ENCODE measurements at regions of chr6 and their contacts with region 1.

Region 1: DNA sequence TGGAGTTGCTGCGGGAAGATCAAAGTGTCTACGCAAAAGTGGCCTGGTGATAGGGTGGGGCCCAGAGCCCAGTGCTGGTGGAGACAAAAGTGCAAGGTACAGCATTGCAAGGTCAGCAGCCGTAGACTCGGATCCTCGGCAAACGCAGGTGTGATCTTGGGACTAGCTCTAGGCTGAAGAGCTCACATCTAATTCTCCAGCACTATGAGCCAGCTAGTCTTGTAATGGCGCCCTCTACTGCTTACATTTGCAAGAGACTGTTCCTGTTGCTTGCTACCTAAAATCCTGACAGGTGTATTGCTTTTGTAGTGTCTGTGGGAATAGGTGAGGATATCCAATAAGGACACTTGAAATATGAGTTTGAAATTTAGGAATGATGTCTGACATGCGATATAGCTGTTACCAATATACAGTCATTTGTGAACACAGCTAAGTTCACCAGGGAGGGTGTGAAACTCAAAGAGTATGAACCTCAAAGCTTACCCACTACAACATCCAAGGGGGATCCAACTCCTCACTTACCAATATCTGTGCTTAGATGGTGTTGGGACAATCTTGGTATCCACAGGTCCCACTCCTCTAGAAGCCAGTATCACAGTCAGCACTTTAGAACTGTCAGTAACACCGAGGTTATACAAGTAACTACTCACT is 58.4 kb downstream of the PDE7B start:
- DNase-seq: peak; percentile 70
- ATAC-seq: peak; percentile 97
- H3K4me3 ChIP-seq: no peak overlapping the region
- H3K27ac ChIP-seq: no peak overlapping the region
- H3K4me1 ChIP-seq: no peaks in the 10 kb centered on the region
- H3K27me3 ChIP-seq: 0 out of 5 replicates have a peak, but pooled peaks cover 0 to 7% of the 10 kb centered on the region in 2 experiments
- CTCF ChIP-seq: peak; percentile 81
- EP300 ChIP-seq: no peak
- POLR2A ChIP-seq: no peak
- RAD21 ChIP-seq: peak; percentile 54; the same call in 1 of the 2 replicates

Region 2: GRCh38 chr6:135506270-135506997 is 403.4 kb before region 1 on chr6:
- CTCF ChIA-PET with region 1: interaction called, 9 read pairs
- POLR2A ChIA-PET with region 1: no interaction called
- in situ Hi-C with region 1: no loop called
- intact Hi-C with region 1: loop called (anchors 1 kb)
- DNase-seq: peak; percentile 45
- ATAC-seq: peak; percentile 70
- H3K4me3 ChIP-seq: no peak overlapping the region
- H3K27ac ChIP-seq: no peak overlapping the region
- H3K4me1 ChIP-seq: peaks cover 19% of the 10 kb centered on the region
- H3K27me3 ChIP-seq: no peaks in the 10 kb centered on the region
- CTCF ChIP-seq: peak; percentile 71
- EP300 ChIP-seq: no peak
- POLR2A ChIP-seq: no peak
- RAD21 ChIP-seq: no peak

Region 3: DNA sequence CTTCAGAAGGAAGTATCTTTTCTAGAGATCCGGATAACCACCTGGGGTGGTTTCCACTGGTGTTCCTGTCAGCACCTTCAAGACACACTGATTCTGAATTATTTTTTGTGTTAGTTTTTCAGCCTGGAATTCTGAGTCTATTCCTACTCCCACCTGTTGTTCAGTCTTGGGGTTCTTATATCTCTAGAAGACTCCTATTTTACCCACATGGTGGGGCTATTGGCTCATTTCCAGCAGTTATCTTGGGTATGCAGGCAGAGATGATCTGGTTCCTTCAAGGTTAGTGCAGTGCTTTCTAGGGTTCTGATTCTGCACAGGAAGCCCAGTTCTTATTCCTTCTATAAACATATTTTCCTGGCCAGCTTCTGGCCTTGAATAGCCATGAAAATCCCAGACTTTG is 234.0 kb before region 1 on chr6:
- CTCF ChIA-PET with region 1: no interaction called
- POLR2A ChIA-PET with region 1: no interaction called
- in situ Hi-C with region 1: no loop called
- intact Hi-C with region 1: loop called (anchors 1 kb)
- DNase-seq: peak; percentile 22
- ATAC-seq: peak; percentile 44; the same call in 1 of the 3 replicates
- H3K4me3 ChIP-seq: no peak overlapping the region
- H3K27ac ChIP-seq: no peak overlapping the region
- H3K4me1 ChIP-seq: no peaks in the 10 kb centered on the region
- H3K27me3 ChIP-seq: no peaks in the 10 kb centered on the region
- CTCF ChIP-seq: peak; percentile 53
- EP300 ChIP-seq: no peak
- POLR2A ChIP-seq: no peak
- RAD21 ChIP-seq: no peak

Region 4: DNA sequence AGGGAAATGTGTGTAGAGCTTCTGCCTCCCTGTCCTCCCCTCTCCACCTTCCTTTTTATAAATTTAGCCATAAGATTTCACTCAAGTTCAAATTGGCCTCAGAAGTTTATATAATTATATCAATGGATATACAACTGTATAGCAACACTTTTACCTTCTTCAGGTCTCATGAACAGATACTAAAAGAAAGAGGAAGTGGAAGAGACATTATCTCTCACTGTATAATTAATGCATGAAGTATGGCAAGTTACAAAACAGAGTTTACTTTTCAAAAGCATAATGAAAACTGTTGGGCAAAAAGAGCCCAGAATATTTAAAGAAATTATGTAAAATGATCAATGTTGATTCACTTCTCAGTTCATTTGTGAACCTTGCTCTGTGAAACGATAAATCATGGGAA is 41.3 kb after region 1 on chr6:
- CTCF ChIA-PET with region 1: no interaction called
- POLR2A ChIA-PET with region 1: no interaction called
- in situ Hi-C with region 1: no loop called
- intact Hi-C with region 1: no loop called
- DNase-seq: no peak
- ATAC-seq: no peak
- H3K4me3 ChIP-seq: no peak overlapping the region
- H3K27ac ChIP-seq: no peak overlapping the region
- H3K4me1 ChIP-seq: no peaks in the 10 kb centered on the region
- H3K27me3 ChIP-seq: no peaks in the 10 kb centered on the region
- CTCF ChIP-seq: no peak
- EP300 ChIP-seq: no peak
- POLR2A ChIP-seq: no peak
- RAD21 ChIP-seq: no peak